ENCODE measurements at regions of chr2 and their contacts with region 1.

Region 1: DNA sequence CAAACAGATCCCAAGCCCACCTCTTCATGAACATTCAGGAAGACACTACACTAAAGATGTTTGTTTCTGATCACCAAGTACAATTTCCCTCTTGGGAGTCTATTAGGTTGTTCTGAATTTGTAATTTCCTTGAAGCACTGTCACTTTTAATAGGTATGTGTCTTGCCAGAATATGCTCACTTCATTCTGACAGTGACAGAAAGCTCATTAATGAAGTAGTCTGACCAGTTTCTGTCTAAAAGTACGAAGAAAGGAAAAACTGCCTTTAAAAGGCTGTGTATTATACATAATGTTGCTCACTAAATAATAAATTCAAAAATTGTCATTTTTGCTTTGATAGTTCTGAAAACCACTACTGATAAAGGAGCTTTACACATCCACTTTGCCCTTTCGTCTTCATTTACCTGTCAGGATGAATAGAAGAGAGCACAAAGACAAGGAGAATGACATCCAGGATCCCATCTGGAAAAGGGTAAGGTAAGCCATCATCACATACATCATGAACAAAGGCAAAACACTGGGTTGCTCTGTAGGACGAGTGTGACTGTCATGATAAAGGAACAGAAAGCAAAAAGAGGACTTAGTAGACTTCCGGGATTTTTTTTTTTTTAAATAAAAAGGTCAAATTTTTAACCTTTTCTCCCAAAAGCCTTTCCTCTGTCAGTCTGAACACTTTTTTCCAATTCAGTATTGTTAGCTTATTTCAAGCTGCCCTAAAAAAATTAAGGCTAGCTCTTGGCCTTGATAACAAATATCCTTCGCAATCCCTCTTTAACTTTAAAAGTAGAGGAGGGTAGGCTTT is 103.4 kb downstream of the METTL8 start:
- DNase-seq: no peak
- H3K4me3 ChIP-seq: no peak overlapping the region
- H3K27ac ChIP-seq: no peak overlapping the region
- H3K4me1 ChIP-seq: no peaks in the 10 kb centered on the region
- H3K27me3 ChIP-seq: no peaks in the 10 kb centered on the region
- CTCF ChIP-seq: no peak

Region 2: DNA sequence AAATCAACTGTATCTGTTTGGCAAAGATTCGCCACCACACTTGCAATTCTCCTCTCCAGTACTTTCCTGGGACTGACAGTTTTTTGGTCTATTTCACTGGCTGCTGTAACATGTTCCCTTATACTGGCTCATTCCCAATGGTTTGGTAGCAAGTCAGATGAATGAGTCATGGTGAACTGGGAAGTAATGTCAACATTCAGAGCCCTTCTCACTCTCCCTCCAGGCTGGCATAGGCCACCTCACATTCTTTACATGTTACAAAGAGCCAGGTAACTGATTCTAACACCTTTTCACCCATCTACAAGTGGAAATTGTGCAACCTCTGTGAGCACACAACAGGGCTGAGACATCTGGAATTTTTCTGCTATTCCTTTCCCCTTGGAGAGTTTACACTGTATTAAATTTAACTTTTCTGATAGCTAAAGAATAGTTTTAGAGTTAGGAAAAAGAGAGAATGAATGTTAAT is 58.4 kb before region 1 on chr2:
- CTCF ChIA-PET with region 1: no interaction called
- dilution Hi-C with region 1: no loop called
- in situ Hi-C with region 1: no loop called
- intact Hi-C with region 1: no loop called
- DNase-seq: peak; percentile 98
- H3K4me3 ChIP-seq: no peak overlapping the region
- H3K27ac ChIP-seq: peak overlapping the region; percentile 50
- H3K4me1 ChIP-seq: peaks cover 17% of the 10 kb centered on the region
- H3K27me3 ChIP-seq: no peaks in the 10 kb centered on the region
- CTCF ChIP-seq: no peak

Region 3: GRCh38 chr2:171287036-171287571 is 43.3 kb before region 1 on chr2:
- CTCF ChIA-PET with region 1: interaction called, 11 read pairs
- dilution Hi-C with region 1: no loop called
- in situ Hi-C with region 1: no loop called
- intact Hi-C with region 1: no loop called
- DNase-seq: no peak
- H3K4me3 ChIP-seq: no peak overlapping the region
- H3K27ac ChIP-seq: no peak overlapping the region
- H3K4me1 ChIP-seq: peaks cover 11% of the 10 kb centered on the region
- H3K27me3 ChIP-seq: no peaks in the 10 kb centered on the region
- CTCF ChIP-seq: no peak